ENCODE measurements at regions of chr21 and their contacts with region 1.

Region 1: DNA sequence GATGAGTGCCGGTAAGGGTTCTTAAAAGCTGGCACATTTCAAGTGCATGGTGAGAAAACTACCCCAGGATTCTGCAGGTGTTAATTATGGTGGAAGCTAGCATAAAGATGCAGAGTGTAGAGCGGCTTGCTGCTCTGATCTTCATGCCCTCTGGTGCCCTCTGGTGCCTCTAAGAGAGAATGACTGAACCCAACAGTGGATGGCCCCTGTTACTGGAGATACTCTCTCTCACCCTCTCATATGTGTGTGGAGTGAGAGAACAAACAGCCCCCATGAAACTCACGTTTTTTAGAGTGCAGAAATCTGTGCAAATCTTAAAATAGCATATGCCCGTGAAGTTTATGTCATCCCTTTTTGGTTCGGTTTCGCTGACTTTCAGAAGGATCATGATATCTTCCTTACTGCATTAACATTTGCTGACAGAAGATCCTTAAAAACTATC is 90.0 kb downstream of the GRIK1 start:
- DNase-seq: no peak
- H3K4me3 ChIP-seq: no peak overlapping the region
- H3K27ac ChIP-seq: no peak overlapping the region
- H3K4me1 ChIP-seq: no peaks in the 10 kb centered on the region
- H3K27me3 ChIP-seq: no peaks in the 10 kb centered on the region
- CTCF ChIP-seq: peak; percentile 7 to 61 (median 40)
- EP300 ChIP-seq: no peak
- POLR2A ChIP-seq: no peak

Region 2: GRCh38 chr21:29477941-29478340 is 371.8 kb before region 1 on chr21:
- intact Hi-C with region 1: loop called (anchors 5 kb)
- DNase-seq: no peak
- H3K4me3 ChIP-seq: no peak overlapping the region
- H3K27ac ChIP-seq: no peak overlapping the region
- H3K4me1 ChIP-seq: peaks cover 0 to 4% (median 0%) of the 10 kb centered on the region in 4 donors
- H3K27me3 ChIP-seq: no peaks in the 10 kb centered on the region
- CTCF ChIP-seq: no peak
- EP300 ChIP-seq: no peak
- POLR2A ChIP-seq: no peak

Region 3: DNA sequence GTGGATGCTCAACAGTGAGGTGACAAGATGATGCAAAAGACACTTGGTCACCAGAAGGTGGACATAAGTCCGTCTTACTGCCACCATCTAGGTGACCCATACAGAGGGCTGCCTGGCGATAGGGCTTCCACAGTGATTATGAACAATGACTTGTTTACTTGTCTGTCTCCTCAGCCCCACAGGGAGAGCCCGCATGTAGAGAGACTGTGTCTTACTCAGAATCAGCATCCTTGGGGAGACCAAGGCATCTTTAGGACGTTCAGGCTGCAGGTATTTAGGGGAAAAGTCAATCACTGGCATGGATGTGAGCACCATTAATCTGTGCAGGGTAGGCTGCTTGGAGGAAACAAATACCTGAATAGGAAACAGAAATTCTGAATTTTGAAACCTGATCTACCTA is 153.3 kb before region 1 on chr21:
- intact Hi-C with region 1: no loop called
- DNase-seq: no peak
- H3K4me3 ChIP-seq: no peak overlapping the region
- H3K27ac ChIP-seq: no peak overlapping the region
- H3K4me1 ChIP-seq: no peaks in the 10 kb centered on the region
- H3K27me3 ChIP-seq: no peaks in the 10 kb centered on the region
- CTCF ChIP-seq: no peak
- EP300 ChIP-seq: no peak
- POLR2A ChIP-seq: no peak